Caco-2 (cell line): ENCODE measurements at regions of chr20 and their contacts with region 1.

Region 1: GRCh38 chr20:2172305-2173175 is 70.9 kb downstream of the STK35 start:
- DNase-seq: peak; percentile 70 to 79
- H3K4me3 ChIP-seq: no peak overlapping the region
- H3K4me3 Mint-ChIP-seq: peak overlapping the region; percentile 47
- H3K27ac Mint-ChIP-seq: no peak overlapping the region
- H3K4me1 ChIP-seq: no peaks in the 10 kb centered on the region
- H3K4me1 Mint-ChIP-seq: peaks cover 13% of the 10 kb centered on the region
- H3K27me3 ChIP-seq: no peaks in the 10 kb centered on the region
- H3K27me3 Mint-ChIP-seq: peaks cover 18% of the 10 kb centered on the region
- CTCF ChIP-seq: peak; percentile 94 to 95

Region 2: DNA sequence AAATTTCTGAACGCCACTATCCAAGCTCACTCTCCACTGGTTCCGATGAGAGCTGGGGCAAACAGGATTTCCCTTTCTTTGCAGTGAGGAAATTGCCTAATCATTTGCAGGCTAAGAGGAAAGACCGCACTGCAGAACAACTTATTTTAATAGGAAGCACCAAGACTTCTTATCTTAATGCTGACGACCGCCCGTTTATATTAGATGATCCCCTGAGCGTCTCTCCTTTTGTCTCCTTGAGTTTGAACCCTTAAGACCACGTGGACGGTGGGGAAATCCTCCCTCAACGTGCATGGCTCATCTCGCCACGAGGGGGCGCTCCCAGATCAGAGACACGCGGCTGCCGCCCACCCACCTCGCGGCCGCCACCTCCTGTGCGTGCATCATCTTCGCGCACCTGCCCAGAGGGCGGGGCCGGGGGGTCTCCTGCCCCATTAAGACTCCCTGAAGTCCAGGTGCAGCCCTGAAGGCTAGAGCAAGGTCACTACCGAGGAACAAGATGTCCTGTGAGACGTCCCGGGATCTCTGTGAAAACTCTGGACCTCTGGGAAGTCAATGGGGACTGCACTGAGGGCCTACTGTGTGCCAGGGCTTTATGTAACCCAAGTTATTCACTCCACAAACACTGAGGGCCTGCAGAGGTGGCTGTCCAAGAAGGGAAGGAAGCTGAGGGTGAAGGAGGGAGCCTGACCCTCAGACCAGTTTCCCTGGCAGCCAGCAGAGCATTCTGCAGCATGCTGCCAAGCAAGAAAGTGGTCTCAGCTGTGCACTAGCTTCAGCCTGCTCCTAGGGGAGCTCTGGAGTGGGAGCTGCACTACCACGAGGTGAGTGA is 206.8 kb before region 1 on chr20:
- CTCF ChIA-PET with region 1: interaction called, 7 read pairs
- POLR2A ChIA-PET with region 1: no interaction called
- intact Hi-C with region 1: loop called (anchors 1 kb)
- DNase-seq: peak; percentile 74 to 87
- H3K4me3 ChIP-seq: no peak overlapping the region
- H3K4me3 Mint-ChIP-seq: peak overlapping the region; percentile 12
- H3K27ac Mint-ChIP-seq: no peak overlapping the region
- H3K4me1 ChIP-seq: no peaks in the 10 kb centered on the region
- H3K4me1 Mint-ChIP-seq: peaks cover 7% of the 10 kb centered on the region
- H3K27me3 ChIP-seq: no peaks in the 10 kb centered on the region
- H3K27me3 Mint-ChIP-seq: peaks cover 20% of the 10 kb centered on the region
- CTCF ChIP-seq: peak; percentile 93 to 97

Region 3: GRCh38 chr20:2005831-2006426 is 166.6 kb before region 1 on chr20:
- CTCF ChIA-PET with region 1: interaction called, 6 read pairs
- POLR2A ChIA-PET with region 1: no interaction called
- intact Hi-C with region 1: loop called (anchors 1 kb)
- DNase-seq: peak; percentile 75 to 89
- H3K4me3 ChIP-seq: no peak overlapping the region
- H3K4me3 Mint-ChIP-seq: no peak overlapping the region
- H3K27ac Mint-ChIP-seq: no peak overlapping the region
- H3K4me1 ChIP-seq: no peaks in the 10 kb centered on the region
- H3K4me1 Mint-ChIP-seq: no peaks in the 10 kb centered on the region
- H3K27me3 ChIP-seq: no peaks in the 10 kb centered on the region
- H3K27me3 Mint-ChIP-seq: peaks cover 12% of the 10 kb centered on the region
- CTCF ChIP-seq: no peak

Region 4: DNA sequence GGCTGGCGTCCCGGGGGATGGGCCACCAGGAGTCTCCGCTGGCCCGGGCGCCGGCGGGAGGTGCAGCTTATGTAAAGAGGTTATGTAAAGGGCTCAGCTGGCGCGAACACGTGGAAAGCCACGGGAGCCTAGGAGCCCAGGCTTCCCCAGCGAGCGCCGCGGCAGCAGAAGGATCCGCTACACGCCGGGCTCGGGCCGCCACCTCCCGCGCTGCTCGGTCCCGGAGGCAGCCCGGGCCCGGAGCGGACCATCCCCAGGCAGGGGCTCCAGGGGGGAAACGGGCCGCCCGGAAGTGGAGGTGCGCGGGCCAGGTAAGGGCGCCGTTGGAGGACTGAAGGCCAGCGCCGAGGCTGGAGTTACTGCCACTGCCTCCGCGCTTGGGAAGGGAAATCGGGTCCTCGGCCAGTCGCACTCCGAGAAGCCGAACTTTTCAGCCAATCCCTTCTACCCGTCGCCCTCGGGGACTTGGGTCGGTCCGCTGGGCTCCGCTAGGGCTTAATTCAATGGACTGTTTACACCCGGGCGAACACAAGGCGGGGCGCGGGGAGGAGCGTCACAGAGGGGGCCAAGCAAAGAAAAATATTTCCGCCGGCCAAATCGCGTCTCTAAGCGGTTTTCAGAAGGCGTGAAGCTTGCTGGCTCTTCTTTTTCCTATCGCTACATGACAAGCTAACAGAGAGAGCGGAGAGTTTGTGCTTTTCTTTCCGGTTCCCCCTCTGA is 70.5 kb before region 1 on chr20:
- CTCF ChIA-PET with region 1: interaction called, 6 read pairs
- POLR2A ChIA-PET with region 1: no interaction called
- intact Hi-C with region 1: loop called (anchors 5 kb)
- DNase-seq: peak; percentile 94 to 97
- H3K4me3 ChIP-seq: peak overlapping the region; percentile 90
- H3K4me3 Mint-ChIP-seq: peak overlapping the region; percentile 92
- H3K27ac Mint-ChIP-seq: peak overlapping the region; percentile 99
- H3K4me1 ChIP-seq: peaks cover 7% of the 10 kb centered on the region
- H3K4me1 Mint-ChIP-seq: peaks cover 15% of the 10 kb centered on the region
- H3K27me3 ChIP-seq: no peaks in the 10 kb centered on the region
- H3K27me3 Mint-ChIP-seq: peaks cover 2% of the 10 kb centered on the region
- CTCF ChIP-seq: no peak